CD8-positive, alpha-beta T cell (primary cell): ENCODE measurements at regions of chr12 and their contacts with region 1.

Region 1: DNA sequence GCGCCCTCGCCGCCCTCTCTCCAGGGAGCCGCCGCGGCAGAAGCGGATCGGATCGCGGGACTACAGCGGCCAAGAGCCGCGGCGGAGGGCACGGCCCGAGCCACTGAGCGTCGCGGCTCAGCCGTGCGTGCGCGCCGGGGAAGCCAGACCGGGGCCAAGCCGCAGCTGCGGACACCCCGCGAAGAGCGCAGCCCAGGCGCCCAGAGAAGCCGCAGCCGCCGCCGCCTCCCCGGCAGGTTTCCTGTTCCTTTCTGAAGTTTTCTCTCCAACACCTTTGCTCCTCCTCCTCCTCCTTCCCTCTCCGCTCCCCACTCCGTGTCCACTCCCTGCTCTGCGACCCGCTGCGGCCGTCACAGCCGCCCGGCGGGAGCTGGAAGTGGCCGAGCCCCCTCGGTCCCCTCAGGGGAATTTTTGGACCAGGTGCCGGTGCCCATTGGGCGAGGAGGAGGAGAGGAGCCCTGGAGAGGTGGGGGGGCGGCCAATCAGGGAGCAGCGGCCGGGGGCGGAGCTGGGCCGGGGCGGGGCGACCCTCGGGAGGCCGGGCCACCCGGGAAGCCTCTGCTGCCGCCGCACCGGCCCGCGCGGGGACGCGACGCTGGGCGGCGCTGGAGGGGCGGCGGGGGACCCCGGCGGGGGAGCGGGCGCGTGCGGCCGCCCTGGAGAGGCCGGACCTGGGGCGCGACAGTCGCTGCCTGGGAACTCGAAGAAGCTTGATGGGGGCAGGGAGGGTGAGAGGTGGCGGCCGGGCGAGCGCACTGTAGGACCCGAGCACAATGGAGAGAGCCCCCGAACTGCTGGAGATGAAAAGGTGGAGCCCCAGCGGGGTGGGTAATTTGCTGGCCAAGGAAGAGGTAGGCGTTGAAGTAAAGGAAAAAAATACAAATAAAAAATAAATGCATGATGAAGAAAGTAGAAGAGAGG is at the start of gene ITPR2:
- DNase-seq: peak; percentile 80 to 95 (median 92)
- ATAC-seq: peak; percentile 92
- H3K4me3 ChIP-seq: peak within 1 kb of the TSS; percentile 63 to 89
- H3K4me3 Mint-ChIP-seq: peak within 1 kb of the TSS; percentile 97
- H3K27ac ChIP-seq: peak within 1 kb of the TSS; percentile 66 to 87
- H3K27ac Mint-ChIP-seq: peak within 1 kb of the TSS; percentile 98
- H3K4me1 ChIP-seq: peaks cover 9% of the 10 kb centered on the region
- H3K4me1 Mint-ChIP-seq: peaks cover 44% of the 10 kb centered on the region
- H3K27me3 ChIP-seq: no peaks in the 10 kb centered on the region
- H3K27me3 Mint-ChIP-seq: no peaks in the 10 kb centered on the region
- CTCF ChIP-seq: no peak
- total RNA-seq, gene ITPR2: 18.9 to 24.1 TPM

Region 2: DNA sequence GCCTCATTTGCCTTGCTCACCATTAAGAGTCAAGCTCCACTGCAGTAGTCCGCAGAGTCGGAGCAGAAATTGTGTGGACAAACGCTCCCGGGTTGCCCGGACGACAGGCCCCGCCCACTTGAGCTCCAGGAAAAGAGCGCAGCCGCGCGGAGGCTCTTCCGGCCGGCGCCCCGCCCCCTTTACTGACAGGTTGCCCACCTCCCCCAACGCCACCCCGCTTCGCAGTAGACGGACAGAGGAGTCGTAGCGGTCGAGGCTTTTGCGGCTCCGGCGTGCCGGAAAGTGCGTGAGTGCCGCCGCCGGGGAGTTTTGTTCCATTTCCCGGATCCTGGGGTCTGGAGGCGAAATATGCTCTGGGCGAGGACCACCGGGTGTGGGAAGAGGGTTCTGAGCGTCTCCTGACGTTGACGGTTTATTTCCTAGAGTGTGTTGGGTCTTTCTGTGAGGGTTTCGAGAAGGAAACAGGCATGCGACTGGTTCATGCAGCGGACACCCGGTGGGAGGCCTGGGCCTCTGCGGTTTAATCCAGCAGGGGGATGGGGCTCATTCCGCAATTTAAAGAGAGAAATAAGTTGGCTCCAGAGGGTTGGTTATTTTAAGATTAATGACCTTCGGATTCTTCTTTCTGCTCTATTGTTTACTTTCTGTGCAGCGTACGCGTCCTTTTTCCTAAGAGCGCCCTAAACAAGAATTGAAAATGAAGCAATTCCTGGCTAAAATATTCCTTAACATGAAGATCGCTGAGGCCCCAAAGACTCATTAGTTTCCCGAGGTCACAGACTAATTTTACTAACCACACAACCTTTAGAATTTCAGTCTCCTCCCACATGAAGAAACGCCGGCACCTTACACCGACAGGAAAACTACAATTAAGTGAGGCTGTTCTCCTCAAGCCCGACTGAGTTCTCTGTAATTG is 1637.8 kb before region 1 on chr12 and contains the starts of genes DNAI7 and ETFRF1:
- CTCF ChIA-PET with region 1: no interaction called
- POLR2A ChIA-PET with region 1: no interaction called
- intact Hi-C with region 1: loop called in 1 of 2 experiments (anchors 10 kb)
- DNase-seq: peak; percentile 92 to 99 (median 96)
- ATAC-seq: peak; percentile 97
- H3K4me3 ChIP-seq: peak within 1 kb of the TSS; percentile 77
- H3K4me3 Mint-ChIP-seq: peak within 1 kb of the TSS; percentile 97
- H3K27ac ChIP-seq: peak within 1 kb of the TSS; percentile 93 to 97
- H3K27ac Mint-ChIP-seq: peak within 1 kb of the TSS; percentile 99
- H3K4me1 ChIP-seq: peaks cover 18% of the 10 kb centered on the region
- H3K4me1 Mint-ChIP-seq: peaks cover 40% of the 10 kb centered on the region
- H3K27me3 ChIP-seq: no peaks in the 10 kb centered on the region
- H3K27me3 Mint-ChIP-seq: no peaks in the 10 kb centered on the region
- CTCF ChIP-seq: no peak
- total RNA-seq, gene DNAI7: 0.16 to 0.53 TPM
- total RNA-seq, gene ETFRF1: 29.2 to 30.1 TPM

Region 3: DNA sequence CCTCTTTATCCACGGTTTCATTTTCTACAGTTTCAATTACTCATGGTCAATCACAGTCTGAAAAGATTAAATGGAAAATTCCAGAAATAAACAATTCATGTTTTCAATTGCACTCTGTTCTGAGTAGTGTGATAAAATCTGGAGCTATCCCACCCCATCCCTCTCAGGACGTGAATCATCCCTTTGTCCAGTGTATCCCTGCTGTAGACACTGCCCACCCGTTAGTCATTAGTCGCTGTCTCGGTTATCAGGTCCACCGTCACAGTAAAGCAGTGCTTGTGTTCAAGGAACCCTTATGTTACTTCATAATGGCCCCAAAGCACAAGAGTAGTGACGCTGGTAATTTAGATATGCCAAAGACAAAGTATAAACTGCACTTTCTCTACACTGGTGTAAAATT is 1139.0 kb before region 1 on chr12:
- CTCF ChIA-PET with region 1: no interaction called
- POLR2A ChIA-PET with region 1: no interaction called
- intact Hi-C with region 1: no loop called
- DNase-seq: no peak
- ATAC-seq: no peak
- H3K4me3 ChIP-seq: no peak overlapping the region
- H3K4me3 Mint-ChIP-seq: no peak overlapping the region
- H3K27ac ChIP-seq: no peak overlapping the region
- H3K27ac Mint-ChIP-seq: no peak overlapping the region
- H3K4me1 ChIP-seq: no peaks in the 10 kb centered on the region
- H3K4me1 Mint-ChIP-seq: no peaks in the 10 kb centered on the region
- H3K27me3 ChIP-seq: no peaks in the 10 kb centered on the region
- H3K27me3 Mint-ChIP-seq: no peaks in the 10 kb centered on the region
- CTCF ChIP-seq: no peak

Region 4: GRCh38 chr12:26821212-26821701 is 11.8 kb before region 1 on chr12:
- CTCF ChIA-PET with region 1: no interaction called
- POLR2A ChIA-PET with region 1: interaction called, 11 read pairs
- intact Hi-C with region 1: no loop called
- DNase-seq: no peak
- ATAC-seq: no peak
- H3K4me3 ChIP-seq: no peak overlapping the region
- H3K4me3 Mint-ChIP-seq: no peak overlapping the region
- H3K27ac ChIP-seq: no peak overlapping the region
- H3K27ac Mint-ChIP-seq: no peak overlapping the region
- H3K4me1 ChIP-seq: no peaks in the 10 kb centered on the region
- H3K4me1 Mint-ChIP-seq: peaks cover 20% of the 10 kb centered on the region
- H3K27me3 ChIP-seq: no peaks in the 10 kb centered on the region
- H3K27me3 Mint-ChIP-seq: no peaks in the 10 kb centered on the region
- CTCF ChIP-seq: no peak

Region 5: DNA sequence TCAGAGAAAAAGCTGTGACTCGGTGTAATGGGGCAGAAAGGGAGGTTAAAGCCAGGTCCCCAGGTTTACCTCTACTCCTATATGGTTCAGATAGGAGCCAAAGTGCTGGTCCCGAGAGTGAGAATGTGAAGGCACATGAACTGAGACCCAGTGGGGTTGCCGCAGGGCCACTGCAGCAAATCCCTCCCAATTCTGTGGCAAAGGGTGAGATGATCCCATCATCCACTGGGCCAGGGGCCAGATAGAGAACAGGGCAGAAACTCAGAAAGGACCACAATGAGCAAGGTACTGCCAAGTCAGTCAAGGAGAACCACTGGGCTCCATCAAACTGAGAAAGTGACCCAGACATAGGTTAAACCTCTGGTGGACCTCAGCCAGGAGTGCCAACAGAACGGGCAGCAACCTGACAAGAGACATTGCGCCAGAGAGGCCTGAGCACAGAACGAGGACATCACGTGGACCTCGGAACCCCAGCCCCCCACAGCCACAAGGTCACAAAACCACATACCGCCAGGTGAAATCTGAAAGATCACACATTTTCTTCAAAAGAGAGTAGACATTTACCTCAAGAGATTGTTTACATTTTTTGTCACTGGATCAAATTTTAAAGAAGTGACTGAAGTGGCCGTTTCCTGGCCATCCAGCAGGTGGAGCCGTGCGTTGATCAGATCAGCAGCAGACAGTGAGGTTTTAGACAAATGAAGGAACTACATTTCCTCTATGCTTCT is 20.4 kb after region 1 on chr12:
- CTCF ChIA-PET with region 1: interaction called, 15 read pairs
- POLR2A ChIA-PET with region 1: interaction called, 3 read pairs
- intact Hi-C with region 1: loop called in 1 of 2 experiments (anchors 1 kb)
- DNase-seq: peak; percentile 55 to 83 (median 69)
- ATAC-seq: peak; percentile 98
- H3K4me3 ChIP-seq: no peak overlapping the region
- H3K4me3 Mint-ChIP-seq: no peak overlapping the region
- H3K27ac ChIP-seq: no peak overlapping the region
- H3K27ac Mint-ChIP-seq: peak overlapping the region; percentile 33
- H3K4me1 ChIP-seq: peaks cover 6% of the 10 kb centered on the region
- H3K4me1 Mint-ChIP-seq: no peaks in the 10 kb centered on the region
- H3K27me3 ChIP-seq: no peaks in the 10 kb centered on the region
- H3K27me3 Mint-ChIP-seq: peaks cover 4% of the 10 kb centered on the region
- CTCF ChIP-seq: peak; percentile 92

Region 6: DNA sequence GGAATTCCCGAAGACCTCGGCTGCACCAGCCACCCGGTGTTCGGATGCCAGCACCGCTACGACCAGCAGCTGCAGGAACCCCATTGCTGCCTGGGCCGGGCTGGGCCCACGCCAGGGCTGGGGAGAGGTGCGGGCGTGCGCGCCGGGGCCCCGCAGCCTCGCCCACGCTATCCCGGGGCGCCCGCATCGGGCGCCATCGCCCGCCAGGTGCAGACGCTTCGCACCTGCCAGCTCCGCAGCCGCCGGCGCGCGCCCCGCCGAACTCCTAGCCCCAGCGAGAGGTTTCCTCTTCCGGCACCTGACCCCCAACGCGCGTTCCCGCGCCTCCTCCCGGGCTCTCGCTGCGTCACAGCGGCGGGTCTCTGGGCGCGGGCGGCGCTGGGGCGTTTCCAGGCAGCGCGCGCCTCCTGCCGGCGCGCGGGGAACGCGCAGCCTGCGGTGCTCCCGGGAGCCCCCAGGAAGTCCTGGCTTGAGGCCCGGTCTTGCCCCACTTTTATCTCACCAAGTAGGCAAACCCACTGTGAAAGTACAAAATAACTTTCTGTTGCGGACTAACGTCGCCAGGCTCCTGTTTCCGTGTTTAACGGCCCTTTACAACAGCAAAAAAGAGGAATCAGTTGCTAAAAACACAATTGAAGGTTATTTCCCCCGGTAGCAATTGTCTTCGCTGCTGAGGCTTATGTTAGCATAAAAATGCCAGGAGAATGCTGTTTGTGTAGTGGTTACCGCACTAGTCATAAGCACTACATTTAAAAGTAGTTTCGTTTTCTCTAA is 181.2 kb after region 1 on chr12 and contains the start of gene TM7SF3:
- CTCF ChIA-PET with region 1: interaction called, 19 read pairs
- POLR2A ChIA-PET with region 1: interaction called, 29 read pairs
- intact Hi-C with region 1: loop called (anchors 1 kb)
- DNase-seq: peak; percentile 92 to 98 (median 96)
- ATAC-seq: peak; percentile 89
- H3K4me3 ChIP-seq: peak within 1 kb of the TSS; percentile 87 to 93
- H3K4me3 Mint-ChIP-seq: peak within 1 kb of the TSS; percentile 93
- H3K27ac ChIP-seq: peak within 1 kb of the TSS; percentile 80 to 98
- H3K27ac Mint-ChIP-seq: peak within 1 kb of the TSS; percentile 92
- H3K4me1 ChIP-seq: peaks cover 25% of the 10 kb centered on the region
- H3K4me1 Mint-ChIP-seq: peaks cover 51% of the 10 kb centered on the region
- H3K27me3 ChIP-seq: no peaks in the 10 kb centered on the region
- H3K27me3 Mint-ChIP-seq: no peaks in the 10 kb centered on the region
- CTCF ChIP-seq: peak; percentile 98
- total RNA-seq, gene TM7SF3: 5.8 to 7.2 TPM

Region 7: GRCh38 chr12:27511031-27511722 is 678.1 kb after region 1 on chr12:
- CTCF ChIA-PET with region 1: no interaction called
- POLR2A ChIA-PET with region 1: no interaction called
- intact Hi-C with region 1: loop called in 1 of 2 experiments (anchors 5 kb)
- DNase-seq: no peak
- ATAC-seq: no peak
- H3K4me3 ChIP-seq: no peak overlapping the region
- H3K4me3 Mint-ChIP-seq: no peak overlapping the region
- H3K27ac ChIP-seq: no peak overlapping the region
- H3K27ac Mint-ChIP-seq: no peak overlapping the region
- H3K4me1 ChIP-seq: no peaks in the 10 kb centered on the region
- H3K4me1 Mint-ChIP-seq: no peaks in the 10 kb centered on the region
- H3K27me3 ChIP-seq: no peaks in the 10 kb centered on the region
- H3K27me3 Mint-ChIP-seq: no peaks in the 10 kb centered on the region
- CTCF ChIP-seq: no peak

Region 8: DNA sequence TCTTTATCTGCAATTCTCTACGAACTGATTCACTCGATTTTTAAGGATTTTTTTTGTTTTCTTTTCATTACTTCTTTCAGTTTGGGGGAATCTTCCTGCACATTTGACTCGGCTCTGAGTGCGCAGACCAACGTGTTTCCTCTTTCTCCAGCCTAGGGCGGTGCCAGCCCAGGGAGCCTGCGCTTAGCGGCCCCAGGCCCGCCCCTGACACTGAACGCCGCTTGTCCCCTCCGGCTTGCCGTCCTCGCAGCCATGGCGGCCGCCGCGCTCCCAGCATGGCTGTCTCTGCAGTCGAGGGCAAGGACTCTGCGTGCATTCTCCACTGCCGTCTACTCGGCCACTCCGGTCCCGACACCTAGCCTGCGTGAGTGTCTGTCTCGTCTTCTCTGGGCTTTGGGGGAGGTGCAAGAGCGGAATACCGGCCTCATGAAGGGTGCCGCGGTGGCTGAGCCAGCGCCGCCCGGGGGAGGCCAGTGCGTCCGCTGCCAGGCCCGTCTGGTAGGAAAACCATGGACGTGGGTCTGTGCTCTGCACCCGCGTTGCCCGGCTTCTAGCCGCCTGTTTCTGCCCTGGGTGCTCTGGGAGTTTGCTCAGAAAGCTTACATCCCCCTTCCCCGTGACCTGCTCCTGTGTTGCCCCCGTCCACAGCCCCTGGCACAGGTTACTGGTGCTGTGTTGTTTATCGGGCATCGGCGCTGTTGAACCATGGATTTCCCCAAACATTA is 877.7 kb after region 1 on chr12 and contains the start of gene MRPS35:
- CTCF ChIA-PET with region 1: no interaction called
- POLR2A ChIA-PET with region 1: no interaction called
- intact Hi-C with region 1: loop called (anchors 1 to 5 kb)
- DNase-seq: peak; percentile 83 to 95 (median 90)
- ATAC-seq: peak; percentile 96
- H3K4me3 ChIP-seq: peak within 1 kb of the TSS; percentile 86 to 89
- H3K4me3 Mint-ChIP-seq: peak within 1 kb of the TSS; percentile 96
- H3K27ac ChIP-seq: peak within 1 kb of the TSS; percentile 68 to 71
- H3K27ac Mint-ChIP-seq: peak within 1 kb of the TSS; percentile 95
- H3K4me1 ChIP-seq: peaks cover 11% of the 10 kb centered on the region
- H3K4me1 Mint-ChIP-seq: peaks cover 36% of the 10 kb centered on the region
- H3K27me3 ChIP-seq: no peaks in the 10 kb centered on the region
- H3K27me3 Mint-ChIP-seq: peaks cover 6% of the 10 kb centered on the region
- CTCF ChIP-seq: no peak
- total RNA-seq, gene MRPS35: 30.0 to 30.8 TPM